Mammary epithelial cell (primary cell): ENCODE measurements at regions of chr12 and their contacts with region 1.

Region 1: GRCh38 chr12:68971351-68971772 is 38.4 kb upstream of the CPM start:
- DNase-seq: peak; percentile 87
- H3K4me3 ChIP-seq: no peak overlapping the region
- H3K27ac ChIP-seq: peak overlapping the region; percentile 57
- H3K4me1 ChIP-seq: peaks cover 10% of the 10 kb centered on the region
- H3K27me3 ChIP-seq: no peaks in the 10 kb centered on the region
- CTCF ChIP-seq: no peak

Region 2: GRCh38 chr12:68910128-68910527 is 61.2 kb before region 1 on chr12:
- CTCF ChIA-PET with region 1: no interaction called
- dilution Hi-C with region 1: loop called (anchors 5 kb)
- in situ Hi-C with region 1: no loop called
- intact Hi-C with region 1: no loop called
- DNase-seq: peak; percentile 49
- H3K4me3 ChIP-seq: no peak overlapping the region
- H3K27ac ChIP-seq: no peak overlapping the region
- H3K4me1 ChIP-seq: peaks cover 10% of the 10 kb centered on the region
- H3K27me3 ChIP-seq: no peaks in the 10 kb centered on the region
- CTCF ChIP-seq: no peak

Region 3: GRCh38 chr12:69046363-69046762 is 75.0 kb after region 1 on chr12:
- CTCF ChIA-PET with region 1: no interaction called
- dilution Hi-C with region 1: loop called (anchors 5 kb)
- in situ Hi-C with region 1: no loop called
- intact Hi-C with region 1: loop called (anchors 10 kb)
- DNase-seq: no peak
- H3K4me3 ChIP-seq: no peak overlapping the region
- H3K27ac ChIP-seq: no peak overlapping the region
- H3K4me1 ChIP-seq: peaks cover 7% of the 10 kb centered on the region
- H3K27me3 ChIP-seq: no peaks in the 10 kb centered on the region
- CTCF ChIP-seq: no peak

Region 4: GRCh38 chr12:69052613-69053408 is 81.4 kb after region 1 on chr12:
- CTCF ChIA-PET with region 1: no interaction called
- dilution Hi-C with region 1: loop called (anchors 5 kb)
- in situ Hi-C with region 1: no loop called
- intact Hi-C with region 1: loop called (anchors 10 kb)
- DNase-seq: peak; percentile 80
- H3K4me3 ChIP-seq: no peak overlapping the region
- H3K27ac ChIP-seq: peak overlapping the region; percentile 26
- H3K4me1 ChIP-seq: peaks cover 19% of the 10 kb centered on the region
- H3K27me3 ChIP-seq: no peaks in the 10 kb centered on the region
- CTCF ChIP-seq: peak; percentile 9 to 16

Region 5: DNA sequence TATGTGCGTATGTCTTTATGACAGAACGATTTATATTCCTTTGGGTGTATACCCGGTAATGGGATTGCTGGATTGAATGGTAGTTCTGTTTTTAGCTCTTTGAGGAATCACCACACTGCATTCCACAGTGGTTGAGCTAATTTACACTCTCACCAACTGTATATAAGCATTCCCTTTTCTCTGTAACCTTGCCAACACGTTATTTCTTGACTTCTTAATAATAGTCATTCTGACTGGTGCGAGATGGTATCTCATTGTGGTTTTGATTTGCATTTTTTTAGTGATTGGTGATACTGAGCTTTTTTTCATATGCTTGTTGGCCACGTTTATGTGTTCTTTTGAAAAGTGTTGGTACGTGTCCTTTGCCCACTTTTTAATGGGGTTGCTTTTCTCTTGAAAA is 548.5 kb after region 1 on chr12:
- CTCF ChIA-PET with region 1: no interaction called
- dilution Hi-C with region 1: no loop called
- in situ Hi-C with region 1: no loop called
- intact Hi-C with region 1: no loop called
- DNase-seq: peak; percentile 90
- H3K4me3 ChIP-seq: no peak overlapping the region
- H3K27ac ChIP-seq: peak overlapping the region; percentile 3
- H3K4me1 ChIP-seq: no peaks in the 10 kb centered on the region
- H3K27me3 ChIP-seq: no peaks in the 10 kb centered on the region
- CTCF ChIP-seq: no peak